ENCODE measurements at regions of chr22 and their contacts with region 1.

Region 1: GRCh38 chr22:46737976-46738646 is at the start of gene CERK:
- DNase-seq: peak; percentile 50
- H3K4me3 ChIP-seq: peak within 1 kb of the TSS; percentile 59 to 65
- H3K27ac ChIP-seq: peak within 1 kb of the TSS; percentile 79 to 84
- H3K4me1 ChIP-seq: peaks cover 5% of the 10 kb centered on the region
- H3K27me3 ChIP-seq: no peaks in the 10 kb centered on the region
- CTCF ChIP-seq: no peak
- POLR2A ChIP-seq: peak; percentile 45
- total RNA-seq, gene CERK: 10.2 to 18.0 TPM

Region 2: GRCh38 chr22:46576556-46577367 is 161.3 kb before region 1 on chr22:
- intact Hi-C with region 1: loop called (anchors 5 kb)
- DNase-seq: no peak
- H3K4me3 ChIP-seq: peak overlapping the region; percentile 48
- H3K27ac ChIP-seq: no peak overlapping the region
- H3K4me1 ChIP-seq: no peaks in the 10 kb centered on the region
- H3K27me3 ChIP-seq: no peaks in the 10 kb centered on the region
- CTCF ChIP-seq: no peak
- POLR2A ChIP-seq: no peak

Measured in prostate gland (tissue), 2 donors.